Colonic mucosa (tissue), 4 donors: ENCODE measurements at regions of chr7 and their contacts with region 1.

Region 1: GRCh38 chr7:7424151-7424873 is 111.4 kb downstream of the COL28A1 start:
- DNase-seq: peak; percentile 81
- H3K4me3 ChIP-seq: peak overlapping the region; percentile 7
- H3K27ac ChIP-seq: no peak overlapping the region
- H3K4me1 ChIP-seq: no peaks in the 10 kb centered on the region
- H3K27me3 ChIP-seq: no peaks in the 10 kb centered on the region
- CTCF ChIP-seq: peak; percentile 75

Region 2: DNA sequence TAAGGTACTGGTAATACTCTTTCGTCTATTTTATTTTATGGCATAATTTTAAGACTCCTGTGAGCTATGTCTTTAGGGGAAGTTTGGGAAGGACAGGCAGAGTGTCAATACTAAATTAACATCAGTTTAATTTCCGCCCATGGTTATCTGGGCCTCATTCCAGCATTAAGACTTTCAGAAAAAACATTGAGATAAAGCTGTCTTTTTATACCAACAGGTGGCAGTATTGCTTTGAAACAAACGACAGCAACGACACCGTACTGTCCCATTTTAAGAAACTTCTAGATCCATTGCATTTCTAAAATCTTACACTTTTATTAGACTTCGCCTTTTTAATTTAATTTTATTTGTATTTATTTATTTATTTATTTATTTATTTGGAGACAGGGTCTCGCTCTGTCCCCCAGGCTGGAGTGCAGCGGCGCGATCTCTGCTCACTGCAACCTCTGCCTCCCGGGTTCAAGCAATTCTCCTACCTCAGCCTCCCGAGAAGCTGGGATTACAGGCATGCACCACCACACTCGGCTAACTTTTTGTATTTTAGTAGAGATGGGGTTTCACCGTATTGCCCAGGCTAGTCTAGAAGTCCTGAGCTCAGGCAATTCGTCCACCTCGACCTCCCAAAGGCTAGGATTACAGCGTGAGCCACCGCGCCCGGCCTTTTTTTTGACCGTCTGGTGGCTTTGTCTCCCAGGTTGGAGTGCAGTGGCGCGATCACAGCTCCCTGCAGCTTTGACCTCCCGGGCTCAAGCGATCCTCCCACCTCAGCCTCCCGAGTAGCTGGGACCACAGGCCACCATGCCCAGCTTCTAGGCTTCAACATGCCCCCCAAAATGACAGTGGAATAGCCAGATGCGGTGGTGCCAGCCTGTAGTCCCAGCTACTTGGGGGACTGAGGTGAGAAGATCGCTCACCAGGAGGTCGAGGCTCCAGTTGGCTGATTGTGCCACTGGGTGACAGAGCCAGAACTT is 320.7 kb before region 1 on chr7:
- intact Hi-C with region 1: loop called (anchors 5 kb)
- DNase-seq: no peak
- H3K4me3 ChIP-seq: no peak overlapping the region
- H3K27ac ChIP-seq: no peak overlapping the region
- H3K4me1 ChIP-seq: no peaks in the 10 kb centered on the region
- H3K27me3 ChIP-seq: no peaks in the 10 kb centered on the region
- CTCF ChIP-seq: peak; percentile 62

Region 3: GRCh38 chr7:7182156-7183060 is 241.9 kb before region 1 on chr7 and contains the start of gene C1GALT1:
- intact Hi-C with region 1: no loop called
- DNase-seq: peak; percentile 98
- H3K4me3 ChIP-seq: peak within 1 kb of the TSS; percentile 84
- H3K27ac ChIP-seq: peak within 1 kb of the TSS; percentile 98
- H3K4me1 ChIP-seq: no peaks in the 10 kb centered on the region
- H3K27me3 ChIP-seq: no peaks in the 10 kb centered on the region
- CTCF ChIP-seq: no peak
- total RNA-seq, gene C1GALT1: 33.9 to 39.4 TPM

Region 4: GRCh38 chr7:7535691-7536090 is 111.4 kb after region 1 on chr7 and contains the start of gene COL28A1:
- intact Hi-C with region 1: loop called (anchors 2 kb)
- DNase-seq: no peak
- H3K4me3 ChIP-seq: no peak within 1 kb of the TSS
- H3K27ac ChIP-seq: no peak within 1 kb of the TSS
- H3K4me1 ChIP-seq: no peaks in the 10 kb centered on the region
- H3K27me3 ChIP-seq: no peaks in the 10 kb centered on the region
- CTCF ChIP-seq: no peak
- total RNA-seq, gene COL28A1: 1.2 to 3.5 TPM

Region 5: DNA sequence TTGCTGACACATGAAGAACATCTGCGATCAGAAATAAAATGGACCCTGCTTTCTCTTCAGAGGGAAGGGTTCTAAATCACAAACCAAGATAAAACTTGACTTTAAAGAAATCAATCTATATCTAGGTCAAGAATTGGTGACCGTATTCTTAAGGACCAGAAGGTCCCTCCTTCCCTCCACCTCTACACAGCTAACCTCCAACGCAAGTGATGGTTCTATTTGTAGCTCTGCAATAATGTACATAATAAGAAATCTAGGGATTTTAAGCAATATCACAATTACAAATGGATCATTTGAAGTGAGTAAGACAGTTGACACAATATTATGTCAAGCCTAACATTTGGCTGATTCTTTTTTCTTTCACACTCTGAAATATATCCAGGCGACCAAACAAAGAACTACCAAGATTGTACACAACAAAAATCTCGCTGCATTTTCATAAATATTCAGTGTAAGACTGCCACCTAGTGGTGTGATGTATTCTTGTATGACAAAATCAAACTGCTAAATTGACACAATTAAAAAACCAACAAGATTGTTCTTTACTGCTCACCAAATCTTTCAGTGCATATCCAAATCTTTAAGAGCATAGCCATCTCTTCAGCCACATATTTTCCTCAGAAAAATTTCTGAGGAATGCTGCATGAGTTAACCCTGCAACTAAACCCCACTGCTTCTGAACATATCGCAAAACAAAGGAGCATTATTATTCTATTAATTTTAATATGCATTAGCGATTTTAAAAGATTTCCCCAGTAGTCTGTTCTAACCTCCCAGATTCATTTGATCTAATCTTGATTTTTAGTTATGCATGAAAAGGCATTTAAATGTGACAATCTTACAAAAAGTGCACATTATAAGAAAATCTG is 793.1 kb after region 1 on chr7:
- intact Hi-C with region 1: loop called (anchors 10 kb)
- DNase-seq: peak; percentile 32
- H3K4me3 ChIP-seq: no peak overlapping the region
- H3K27ac ChIP-seq: no peak overlapping the region
- H3K4me1 ChIP-seq: no peaks in the 10 kb centered on the region
- H3K27me3 ChIP-seq: no peaks in the 10 kb centered on the region
- CTCF ChIP-seq: peak; percentile 61